ENCODE measurements at regions of chr6 and their contacts with region 1.

Region 1: DNA sequence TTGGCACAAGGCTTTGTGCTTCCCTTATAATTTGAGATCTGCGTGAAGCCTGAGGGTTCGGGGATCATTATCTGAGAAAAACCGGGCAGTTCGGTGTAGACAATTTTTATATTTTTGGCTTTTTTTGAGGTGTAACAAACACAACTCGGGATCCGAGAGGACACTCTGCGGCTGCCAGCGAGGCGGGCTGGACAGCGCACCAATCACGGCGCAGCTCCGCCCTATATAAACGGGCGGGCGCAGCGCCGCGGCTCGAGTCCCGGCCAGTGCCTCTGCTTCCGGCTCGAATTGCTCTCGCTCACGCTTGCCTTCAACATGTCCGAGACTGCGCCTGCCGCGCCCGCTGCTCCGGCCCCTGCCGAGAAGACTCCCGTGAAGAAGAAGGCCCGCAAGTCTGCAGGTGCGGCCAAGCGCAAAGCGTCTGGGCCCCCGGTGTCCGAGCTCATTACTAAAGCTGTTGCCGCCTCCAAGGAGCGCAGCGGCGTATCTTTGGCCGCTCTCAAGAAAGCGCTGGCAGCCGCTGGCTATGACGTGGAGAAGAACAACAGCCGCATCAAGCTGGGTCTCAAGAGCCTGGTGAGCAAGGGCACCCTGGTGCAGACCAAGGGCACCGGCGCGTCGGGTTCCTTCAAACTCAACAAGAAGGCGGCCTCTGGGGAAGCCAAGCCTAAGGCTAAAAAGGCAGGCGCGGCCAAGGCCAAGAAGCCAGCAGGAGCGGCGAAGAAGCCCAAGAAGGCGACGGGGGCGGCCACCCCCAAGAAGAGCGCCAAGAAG is 69.0 kb downstream of the HFE start:
- DNase-seq: peak; percentile 73 to 96 (median 88)
- ATAC-seq: peak; percentile 48 to 58
- H3K4me3 Mint-ChIP-seq: peak overlapping the region; percentile 89 to 99 (median 96)
- H3K27ac Mint-ChIP-seq: peak overlapping the region; percentile 92 to 100 (median 98)
- H3K4me1 Mint-ChIP-seq: peaks cover 24 to 44% (median 39%) of the 10 kb centered on the region in 4 donors
- H3K27me3 Mint-ChIP-seq: no peaks in the 10 kb centered on the region

Region 2: DNA sequence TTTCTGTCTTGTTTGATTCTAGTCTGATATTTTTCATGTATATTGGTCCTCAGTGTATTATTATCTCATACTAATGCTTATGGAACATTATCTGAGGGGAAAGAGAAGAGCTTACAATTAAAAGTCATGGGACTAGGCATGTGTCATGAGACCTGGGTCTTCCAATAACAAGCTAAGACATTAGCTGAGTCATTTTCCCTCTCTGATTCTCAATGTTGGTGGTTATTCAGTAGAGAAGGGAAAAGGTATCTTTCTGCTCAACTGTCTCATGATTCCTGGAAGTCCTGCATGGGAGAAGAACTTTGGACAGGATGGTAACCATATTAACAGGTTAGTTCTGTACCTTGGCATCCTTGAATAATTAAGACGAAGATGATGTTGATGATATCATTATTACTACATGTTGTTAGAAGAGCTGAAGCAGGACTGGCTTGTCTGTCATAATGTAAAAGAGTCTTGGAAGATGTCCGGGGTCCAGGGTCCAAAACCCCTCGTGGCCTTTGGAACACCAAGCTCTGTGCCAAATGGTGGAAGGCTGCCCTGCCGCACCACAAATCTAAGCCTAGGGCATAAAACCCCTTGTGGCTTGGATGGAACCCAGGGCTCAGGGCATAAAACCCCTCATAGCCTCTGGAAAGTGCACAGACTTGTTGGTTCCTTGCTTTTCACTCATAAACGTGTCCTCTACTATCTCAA is 174.5 kb before region 1 on chr6:
- POLR2A ChIA-PET with region 1: no interaction called
- DNase-seq: no peak
- ATAC-seq: no peak
- H3K4me3 Mint-ChIP-seq: no peak overlapping the region
- H3K27ac Mint-ChIP-seq: peak overlapping the region in 7 of 10 donors; percentile 4 to 72 (median 27)
- H3K4me1 Mint-ChIP-seq: peaks cover 2 to 7% (median 6%) of the 10 kb centered on the region in 4 donors
- H3K27me3 Mint-ChIP-seq: no peaks in the 10 kb centered on the region

Region 3: DNA sequence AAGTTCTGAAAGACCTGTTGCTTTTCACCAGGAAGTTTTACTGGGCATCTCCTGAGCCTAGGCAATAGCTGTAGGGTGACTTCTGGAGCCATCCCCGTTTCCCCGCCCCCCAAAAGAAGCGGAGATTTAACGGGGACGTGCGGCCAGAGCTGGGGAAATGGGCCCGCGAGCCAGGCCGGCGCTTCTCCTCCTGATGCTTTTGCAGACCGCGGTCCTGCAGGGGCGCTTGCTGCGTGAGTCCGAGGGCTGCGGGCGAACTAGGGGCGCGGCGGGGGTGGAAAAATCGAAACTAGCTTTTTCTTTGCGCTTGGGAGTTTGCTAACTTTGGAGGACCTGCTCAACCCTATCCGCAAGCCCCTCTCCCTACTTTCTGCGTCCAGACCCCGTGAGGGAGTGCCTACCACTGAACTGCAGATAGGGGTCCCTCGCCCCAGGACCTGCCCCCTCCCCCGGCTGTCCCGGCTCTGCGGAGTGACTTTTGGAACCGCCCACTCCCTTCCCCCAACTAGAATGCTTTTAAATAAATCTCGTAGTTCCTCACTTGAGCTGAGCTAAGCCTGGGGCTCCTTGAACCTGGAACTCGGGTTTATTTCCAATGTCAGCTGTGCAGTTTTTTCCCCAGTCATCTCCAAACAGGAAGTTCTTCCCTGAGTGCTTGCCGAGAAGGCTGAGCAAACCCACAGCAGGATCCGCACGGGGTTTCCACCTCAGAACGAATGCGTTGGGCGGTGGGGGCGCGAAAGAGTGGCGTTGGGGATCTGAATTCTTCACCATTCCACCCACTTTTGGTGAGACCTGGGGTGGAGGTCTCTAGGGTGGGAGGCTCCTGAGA is 68.8 kb before region 1 on chr6 and contains the start of gene HFE:
- POLR2A ChIA-PET with region 1: interaction called, 16 read pairs
- DNase-seq: peak in 6 of 10 donors; percentile 14 to 43 (median 32)
- ATAC-seq: peak in 1 of 2 donors; percentile 29
- H3K4me3 Mint-ChIP-seq: peak within 1 kb of the TSS; percentile 84 to 93 (median 88)
- H3K27ac Mint-ChIP-seq: peak within 1 kb of the TSS in 9 of 10 donors; percentile 74 to 92 (median 86)
- H3K4me1 Mint-ChIP-seq: peaks cover 12 to 56% (median 29%) of the 10 kb centered on the region in 4 donors
- H3K27me3 Mint-ChIP-seq: no peaks in the 10 kb centered on the region
- polyA plus RNA-seq, gene HFE: 0.68 to 3.8 (median 1.8) TPM

Region 4: DNA sequence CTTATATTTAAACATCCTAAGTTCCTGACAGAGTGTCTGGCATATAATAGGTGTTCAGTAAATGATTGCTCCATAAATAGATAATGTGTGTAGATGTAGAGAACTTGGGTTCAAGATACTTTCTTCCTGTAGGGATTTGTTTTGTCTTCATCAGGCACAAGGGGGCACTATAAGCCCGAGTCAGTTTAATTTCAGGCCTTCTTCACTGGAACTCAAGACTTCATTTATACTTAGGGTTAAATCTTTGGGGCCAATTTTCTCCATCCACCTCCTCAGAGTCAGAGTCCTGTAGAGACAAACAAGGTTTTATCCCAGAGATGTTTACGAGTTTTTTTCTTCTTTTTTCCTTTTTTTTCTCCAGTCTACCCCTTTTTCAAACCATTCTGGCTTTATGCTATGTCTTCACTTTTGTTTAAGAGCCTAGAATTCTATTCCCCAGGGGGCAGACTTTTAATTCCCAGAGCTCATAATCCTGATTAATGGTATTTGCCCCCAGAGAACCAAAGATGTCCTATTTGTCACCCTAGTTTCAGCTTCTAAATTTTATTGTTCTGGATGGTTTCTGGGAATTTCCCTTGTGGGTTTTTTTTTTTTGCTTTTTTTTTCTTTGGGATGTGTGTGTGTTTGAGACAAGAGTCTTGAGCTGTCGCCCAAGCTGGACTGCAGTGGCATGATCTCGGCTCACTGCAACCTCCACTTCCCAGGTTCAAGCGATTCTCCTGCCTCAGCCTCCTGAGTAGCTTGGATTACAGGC is 19.3 kb after region 1 on chr6:
- POLR2A ChIA-PET with region 1: interaction called, 455 read pairs
- DNase-seq: peak in 9 of 10 donors; percentile 21 to 76 (median 59)
- ATAC-seq: no peak
- H3K4me3 Mint-ChIP-seq: peak overlapping the region in 5 of 10 donors; percentile 33 to 62 (median 51)
- H3K27ac Mint-ChIP-seq: peak overlapping the region; percentile 11 to 82 (median 59)
- H3K4me1 Mint-ChIP-seq: peaks cover 15 to 43% (median 34%) of the 10 kb centered on the region in 4 donors
- H3K27me3 Mint-ChIP-seq: no peaks in the 10 kb centered on the region

Region 5: DNA sequence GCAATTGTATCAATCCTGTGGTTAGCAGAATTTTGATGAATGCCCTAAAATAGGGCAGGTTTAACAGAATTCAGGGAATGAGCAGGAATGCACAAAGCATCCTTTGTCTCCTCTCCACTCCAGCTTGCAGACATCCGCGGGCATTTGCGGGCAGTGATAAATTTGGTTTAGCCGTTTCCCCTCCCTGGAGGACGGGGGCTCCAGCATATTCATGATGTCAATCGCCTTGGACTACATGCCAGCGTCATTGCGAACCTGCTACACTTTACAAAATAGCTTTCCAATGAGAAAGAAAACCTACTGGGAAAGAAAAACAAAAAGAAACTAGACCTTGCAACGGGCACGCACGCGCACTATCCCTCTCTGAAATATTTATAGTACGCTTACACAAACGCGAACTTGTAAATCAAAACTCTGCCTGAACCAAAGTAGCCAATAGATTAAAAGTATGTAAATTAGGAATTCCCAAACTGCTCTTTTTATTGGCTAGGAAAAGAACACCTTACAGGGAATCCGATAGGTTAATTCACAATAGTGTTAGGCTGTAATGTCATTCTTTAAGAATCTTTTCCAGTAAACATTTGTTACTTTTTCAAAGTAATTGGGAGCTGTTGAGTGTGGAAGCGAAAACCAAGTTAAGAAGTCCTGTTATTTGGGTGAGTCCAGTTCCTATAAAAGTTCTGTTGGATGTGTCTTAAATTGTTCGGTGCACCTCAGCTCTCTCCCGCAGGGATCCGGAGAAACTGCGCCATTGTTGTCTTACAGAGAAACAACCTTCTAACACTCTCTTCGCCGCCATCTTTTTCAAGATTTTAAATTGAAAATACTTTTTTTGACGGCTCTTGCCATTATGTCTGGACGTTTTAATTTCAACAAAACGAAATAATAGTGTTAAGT is 67.6 kb after region 1 on chr6:
- POLR2A ChIA-PET with region 1: interaction called, 39 read pairs
- DNase-seq: peak; percentile 54 to 85 (median 71)
- ATAC-seq: peak; percentile 89 to 90
- H3K4me3 Mint-ChIP-seq: no peak overlapping the region
- H3K27ac Mint-ChIP-seq: no peak overlapping the region
- H3K4me1 Mint-ChIP-seq: peaks cover 4 to 25% (median 14%) of the 10 kb centered on the region in 4 donors
- H3K27me3 Mint-ChIP-seq: no peaks in the 10 kb centered on the region

Region 6: GRCh38 chr6:27132532-27133280 is 976.4 kb after region 1 on chr6:
- POLR2A ChIA-PET with region 1: interaction called, 36 read pairs
- DNase-seq: peak; percentile 69 to 98 (median 94)
- ATAC-seq: peak; percentile 84
- H3K4me3 Mint-ChIP-seq: no peak overlapping the region
- H3K27ac Mint-ChIP-seq: no peak overlapping the region
- H3K4me1 Mint-ChIP-seq: peaks cover 5 to 20% (median 10%) of the 10 kb centered on the region in 4 donors
- H3K27me3 Mint-ChIP-seq: no peaks in the 10 kb centered on the region

Region 7: GRCh38 chr6:27871924-27872638 is 1715.8 kb after region 1 on chr6:
- POLR2A ChIA-PET with region 1: interaction called, 32 read pairs
- DNase-seq: peak; percentile 57 to 99 (median 91)
- ATAC-seq: peak; percentile 78 to 79
- H3K4me3 Mint-ChIP-seq: peak overlapping the region; percentile 86 to 95 (median 92)
- H3K27ac Mint-ChIP-seq: peak overlapping the region; percentile 89 to 99 (median 96)
- H3K4me1 Mint-ChIP-seq: peaks cover 21 to 46% (median 38%) of the 10 kb centered on the region in 4 donors
- H3K27me3 Mint-ChIP-seq: no peaks in the 10 kb centered on the region